ENCODE measurements at regions of chr13 and their contacts with region 1.

Region 1: DNA sequence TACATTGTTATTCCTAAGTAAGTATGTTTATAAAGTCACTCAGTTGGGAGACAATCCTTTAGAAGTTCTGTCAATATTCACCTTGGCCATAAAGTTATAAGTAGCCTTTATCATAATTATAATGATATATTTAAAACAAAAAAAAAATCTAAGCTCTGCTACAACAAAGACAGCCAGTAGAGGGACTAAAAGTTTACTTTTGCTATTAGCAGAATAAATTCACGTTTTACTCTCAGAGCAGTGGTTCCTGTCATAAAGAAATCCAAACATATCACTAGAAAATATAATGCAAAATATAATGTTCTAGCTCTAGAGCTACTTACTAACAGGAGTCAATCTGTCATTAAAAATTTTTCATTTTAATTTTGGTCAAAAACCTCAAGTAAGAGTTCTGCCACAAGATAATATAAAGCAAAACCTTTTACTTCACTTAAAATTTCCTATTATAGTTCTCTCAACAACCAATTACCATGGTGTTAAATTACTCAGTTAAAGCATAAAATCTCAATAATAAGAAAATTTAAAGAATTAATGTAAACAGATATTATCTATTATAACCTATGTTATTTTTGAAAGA is 17.7 kb downstream of the INTS6 start:
- DNase-seq: no peak
- ATAC-seq: no peak
- H3K4me3 ChIP-seq: no peak overlapping the region
- H3K27ac ChIP-seq: no peak overlapping the region
- H3K4me1 ChIP-seq: peaks cover 12% of the 10 kb centered on the region
- H3K27me3 ChIP-seq: no peaks in the 10 kb centered on the region
- CTCF ChIP-seq: peak; percentile 42

Region 2: DNA sequence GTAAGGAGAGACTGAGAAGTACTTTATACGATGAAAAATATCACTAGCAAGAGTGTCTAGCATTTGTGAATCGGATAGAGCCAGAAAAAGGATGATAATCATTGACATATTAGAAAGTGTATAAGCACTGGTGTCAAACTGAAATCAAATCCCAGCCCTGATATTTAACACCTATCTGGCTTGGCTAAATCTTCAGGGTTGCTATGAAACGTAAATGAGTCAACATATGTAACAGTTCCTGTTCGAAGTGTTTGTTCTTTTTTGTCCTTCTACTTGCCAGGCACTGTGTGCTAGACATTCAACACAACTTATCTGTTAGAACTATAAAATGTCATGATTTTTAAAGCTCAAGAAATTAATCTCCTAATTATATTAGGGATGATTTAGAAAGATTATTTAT is 54.8 kb before region 1 on chr13:
- intact Hi-C with region 1: no loop called
- DNase-seq: no peak
- ATAC-seq: no peak
- H3K4me3 ChIP-seq: no peak overlapping the region
- H3K27ac ChIP-seq: no peak overlapping the region
- H3K4me1 ChIP-seq: no peaks in the 10 kb centered on the region
- H3K27me3 ChIP-seq: no peaks in the 10 kb centered on the region
- CTCF ChIP-seq: no peak

Region 3: GRCh38 chr13:51397262-51397941 is 37.7 kb before region 1 on chr13:
- intact Hi-C with region 1: no loop called
- DNase-seq: peak in 1 of 2 donors; percentile 51
- ATAC-seq: peak; percentile 77 to 93 (median 88)
- H3K4me3 ChIP-seq: no peak overlapping the region
- H3K27ac ChIP-seq: peak overlapping the region; percentile 51
- H3K4me1 ChIP-seq: peaks cover 32% of the 10 kb centered on the region
- H3K27me3 ChIP-seq: no peaks in the 10 kb centered on the region
- CTCF ChIP-seq: no peak

Region 4: DNA sequence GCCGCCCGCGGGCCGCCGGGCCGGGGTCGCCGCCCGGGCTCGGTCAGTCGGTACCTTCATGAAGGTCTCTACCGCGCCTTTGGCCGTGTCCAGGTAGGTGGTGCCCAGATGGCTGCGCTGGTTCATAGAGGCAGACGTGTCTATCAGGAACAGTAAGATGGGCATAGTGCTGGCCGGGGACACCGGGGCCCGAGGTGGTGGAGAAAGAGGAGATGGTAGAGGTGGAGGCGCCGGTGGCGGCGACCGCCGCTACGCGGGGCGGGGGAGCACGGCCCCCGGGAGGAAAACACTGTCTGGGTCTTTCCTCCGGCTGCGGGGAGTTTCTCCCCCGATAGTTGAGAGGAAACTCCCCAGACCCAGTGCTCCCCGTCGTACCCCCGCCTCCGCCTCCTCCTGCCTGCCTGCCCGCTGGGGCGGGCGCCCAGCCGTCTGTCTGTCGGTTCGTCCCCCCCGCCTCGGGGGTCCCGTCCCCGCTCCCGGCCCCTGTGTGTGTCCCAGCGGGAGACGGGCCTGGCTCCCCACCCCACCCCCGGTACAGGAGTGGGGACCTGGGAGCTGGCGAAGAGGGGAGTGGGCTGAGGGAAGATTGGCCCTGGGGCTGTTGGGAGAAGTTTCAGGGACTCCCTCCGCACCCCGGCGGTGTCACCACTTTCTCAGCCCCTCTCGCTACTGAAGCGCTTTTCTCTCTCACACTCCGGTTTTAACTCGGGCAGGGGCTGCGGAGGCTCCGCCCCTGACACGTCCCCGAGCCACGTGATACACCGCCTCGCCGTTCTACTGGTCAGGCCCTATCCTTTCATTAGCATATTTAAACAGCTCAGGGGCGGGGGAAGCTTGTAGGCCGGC is 17.5 kb after region 1 on chr13 and contains the start of gene INTS6:
- intact Hi-C with region 1: no loop called
- DNase-seq: peak; percentile 99
- ATAC-seq: peak; percentile 90 to 92 (median 92)
- H3K4me3 ChIP-seq: peak within 1 kb of the TSS; percentile 94
- H3K27ac ChIP-seq: peak within 1 kb of the TSS; percentile 98
- H3K4me1 ChIP-seq: peaks cover 29% of the 10 kb centered on the region
- H3K27me3 ChIP-seq: no peaks in the 10 kb centered on the region
- CTCF ChIP-seq: no peak
- total RNA-seq, gene INTS6: 14.4 to 19.2 (median 17.6) TPM

Region 5: GRCh38 chr13:51797664-51798488 is 362.8 kb after region 1 on chr13:
- intact Hi-C with region 1: loop called in 1 of 2 experiments (anchors 10 kb)
- DNase-seq: no peak
- ATAC-seq: no peak
- H3K4me3 ChIP-seq: no peak overlapping the region
- H3K27ac ChIP-seq: no peak overlapping the region
- H3K4me1 ChIP-seq: peaks cover 20% of the 10 kb centered on the region
- H3K27me3 ChIP-seq: no peaks in the 10 kb centered on the region
- CTCF ChIP-seq: no peak

Measured in psoas muscle (tissue), 8 donors.